ENCODE measurements at regions of chr14 and their contacts with region 1.

Region 1: DNA sequence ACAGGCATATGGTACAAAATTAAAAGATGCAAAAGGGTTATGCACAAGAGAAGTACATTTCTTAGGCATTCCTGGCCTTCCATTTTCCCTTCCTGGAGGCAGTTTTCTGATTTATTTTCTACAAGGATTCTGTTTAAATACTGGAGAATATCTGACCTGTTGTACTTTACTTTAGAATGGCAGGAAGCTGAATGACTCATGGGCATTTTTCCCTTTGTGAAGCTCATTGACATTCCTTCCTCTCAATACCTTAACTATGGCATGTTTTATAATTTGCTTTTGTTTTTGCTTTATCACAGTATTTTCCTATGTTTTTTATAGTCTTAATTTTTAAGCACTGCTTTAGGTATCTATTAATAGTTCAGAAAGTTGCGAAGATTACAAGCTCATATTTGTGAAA is 62.7 kb downstream of the RCOR1 start:
- DNase-seq: peak; percentile 83
- ATAC-seq: peak; percentile 75
- H3K4me3 ChIP-seq: no peak overlapping the region
- H3K27ac ChIP-seq: peak overlapping the region; percentile 24; the same call in 1 of the 2 replicates
- H3K4me1 ChIP-seq: peaks cover 31% of the 10 kb centered on the region
- H3K27me3 ChIP-seq: no peaks in the 10 kb centered on the region
- CTCF ChIP-seq: no peak

Region 2: GRCh38 chr14:102504328-102504999 is 150.7 kb before region 1 on chr14:
- CTCF ChIA-PET with region 1: no interaction called
- POLR2A ChIA-PET with region 1: interaction called, 14 read pairs
- intact Hi-C with region 1: no loop called
- DNase-seq: no peak
- ATAC-seq: no peak
- H3K4me3 ChIP-seq: no peak overlapping the region
- H3K27ac ChIP-seq: no peak overlapping the region
- H3K4me1 ChIP-seq: peaks cover 20% of the 10 kb centered on the region
- H3K27me3 ChIP-seq: no peaks in the 10 kb centered on the region
- CTCF ChIP-seq: no peak

Region 3: DNA sequence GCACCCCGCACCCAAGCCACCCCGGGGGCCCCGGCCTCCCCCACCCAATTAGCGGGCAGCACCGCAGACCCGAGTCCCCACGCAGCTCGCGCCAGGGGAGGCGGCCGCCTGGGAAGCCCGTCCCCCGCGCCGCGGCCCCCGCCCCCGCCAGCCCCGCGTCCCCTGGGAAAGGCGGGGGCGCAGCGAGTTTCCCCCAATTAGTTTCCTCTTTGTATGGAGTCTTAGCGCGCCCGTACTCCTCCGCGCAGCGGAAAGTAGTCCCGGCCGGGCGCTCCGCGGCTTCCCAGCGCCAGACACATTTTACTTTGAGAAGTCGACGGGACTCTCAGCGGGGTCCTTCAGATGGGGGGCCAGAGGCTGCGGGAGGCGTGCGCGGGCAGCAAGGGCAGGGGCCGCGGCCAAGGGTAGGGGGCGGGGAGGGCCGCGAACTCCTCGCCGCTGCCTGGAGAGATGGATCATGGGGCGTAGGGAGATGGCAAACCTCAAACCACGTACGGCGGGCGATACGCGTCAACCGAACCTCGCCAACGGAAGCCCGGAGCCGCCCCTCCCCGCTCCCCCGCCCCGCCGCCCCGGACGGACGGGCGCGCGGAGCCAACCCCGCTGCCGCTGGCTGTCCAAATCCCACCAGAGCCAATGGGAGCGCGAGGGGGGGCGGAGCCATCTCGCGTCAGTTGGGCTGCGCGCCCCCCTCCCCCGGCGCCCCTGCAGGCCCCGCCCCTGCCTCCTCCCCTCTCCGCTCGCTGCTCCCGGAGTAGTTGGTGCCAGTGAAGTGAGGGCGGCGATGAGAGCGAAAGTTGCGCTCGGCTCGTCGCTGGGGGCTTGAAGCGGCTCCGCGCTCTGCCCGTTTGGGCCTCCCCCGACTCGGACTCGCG is 63.0 kb before region 1 on chr14 and contains the start of gene RCOR1:
- CTCF ChIA-PET with region 1: interaction called, 7 read pairs
- POLR2A ChIA-PET with region 1: interaction called, 12 read pairs
- intact Hi-C with region 1: no loop called
- DNase-seq: peak; percentile 97
- ATAC-seq: peak; percentile 76
- H3K4me3 ChIP-seq: peak within 1 kb of the TSS; percentile 94
- H3K27ac ChIP-seq: peak within 1 kb of the TSS; percentile 91
- H3K4me1 ChIP-seq: peaks cover 21% of the 10 kb centered on the region
- H3K27me3 ChIP-seq: no peaks in the 10 kb centered on the region
- CTCF ChIP-seq: no peak
- total RNA-seq, gene RCOR1: 22.2 and 23.4 TPM in 2 replicates

Measured in PC-3 (cell line).